ENCODE measurements at regions of chr14 and their contacts with region 1.

Region 1: GRCh38 chr14:39266871-39267591 is 33.3 kb downstream of the MIA2 start:
- H3K4me3 Mint-ChIP-seq: peak overlapping the region; percentile 99
- H3K27ac Mint-ChIP-seq: peak overlapping the region; percentile 99
- H3K4me1 Mint-ChIP-seq: peaks cover 49% of the 10 kb centered on the region
- H3K27me3 Mint-ChIP-seq: no peaks in the 10 kb centered on the region

Region 2: GRCh38 chr14:39114073-39114838 is 152.8 kb before region 1 on chr14 and contains the start of gene GEMIN2:
- intact Hi-C with region 1: loop called (anchors 5 kb)
- H3K4me3 Mint-ChIP-seq: peak within 1 kb of the TSS; percentile 94
- H3K27ac Mint-ChIP-seq: peak within 1 kb of the TSS; percentile 82
- H3K4me1 Mint-ChIP-seq: peaks cover 9% of the 10 kb centered on the region
- H3K27me3 Mint-ChIP-seq: peaks cover 3% of the 10 kb centered on the region

Region 3: GRCh38 chr14:39174560-39175444 is 92.2 kb before region 1 on chr14 and contains the start of gene PNN:
- intact Hi-C with region 1: loop called (anchors 2 kb)
- H3K4me3 Mint-ChIP-seq: peak within 1 kb of the TSS; percentile 92
- H3K27ac Mint-ChIP-seq: peak within 1 kb of the TSS; percentile 95
- H3K4me1 Mint-ChIP-seq: peaks cover 21% of the 10 kb centered on the region
- H3K27me3 Mint-ChIP-seq: no peaks in the 10 kb centered on the region

Region 4: DNA sequence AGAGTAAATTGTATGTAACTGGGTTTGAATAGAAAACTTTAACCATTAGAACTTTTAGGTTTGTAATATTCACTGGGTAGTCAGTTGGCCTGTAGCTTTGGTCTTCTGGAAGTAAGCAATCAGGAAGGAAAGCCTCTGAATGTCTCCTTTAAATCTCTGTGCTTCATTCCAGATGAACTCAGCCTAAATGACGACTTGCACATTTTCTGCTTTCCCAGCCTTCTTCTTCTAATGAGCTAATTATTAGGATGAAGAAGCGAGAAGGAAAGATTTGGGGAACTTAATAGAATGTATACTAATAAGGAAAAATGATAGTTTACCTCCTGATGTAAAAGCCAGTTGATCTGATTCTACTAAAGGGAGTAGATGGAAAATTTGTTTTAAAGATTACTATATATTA is 57.1 kb after region 1 on chr14:
- intact Hi-C with region 1: no loop called
- H3K4me3 Mint-ChIP-seq: no peak overlapping the region
- H3K27ac Mint-ChIP-seq: no peak overlapping the region
- H3K4me1 Mint-ChIP-seq: no peaks in the 10 kb centered on the region
- H3K27me3 Mint-ChIP-seq: no peaks in the 10 kb centered on the region

Measured in dendritic cell treated with granulocyte-macrophage colony-stimulating factor and Interleukin-4, amounts not matched to agents 40 ng/mL and 50 ng/mL, for 4 days (primary cell).